ENCODE measurements at regions of chr1 and their contacts with region 1.

Region 1: DNA sequence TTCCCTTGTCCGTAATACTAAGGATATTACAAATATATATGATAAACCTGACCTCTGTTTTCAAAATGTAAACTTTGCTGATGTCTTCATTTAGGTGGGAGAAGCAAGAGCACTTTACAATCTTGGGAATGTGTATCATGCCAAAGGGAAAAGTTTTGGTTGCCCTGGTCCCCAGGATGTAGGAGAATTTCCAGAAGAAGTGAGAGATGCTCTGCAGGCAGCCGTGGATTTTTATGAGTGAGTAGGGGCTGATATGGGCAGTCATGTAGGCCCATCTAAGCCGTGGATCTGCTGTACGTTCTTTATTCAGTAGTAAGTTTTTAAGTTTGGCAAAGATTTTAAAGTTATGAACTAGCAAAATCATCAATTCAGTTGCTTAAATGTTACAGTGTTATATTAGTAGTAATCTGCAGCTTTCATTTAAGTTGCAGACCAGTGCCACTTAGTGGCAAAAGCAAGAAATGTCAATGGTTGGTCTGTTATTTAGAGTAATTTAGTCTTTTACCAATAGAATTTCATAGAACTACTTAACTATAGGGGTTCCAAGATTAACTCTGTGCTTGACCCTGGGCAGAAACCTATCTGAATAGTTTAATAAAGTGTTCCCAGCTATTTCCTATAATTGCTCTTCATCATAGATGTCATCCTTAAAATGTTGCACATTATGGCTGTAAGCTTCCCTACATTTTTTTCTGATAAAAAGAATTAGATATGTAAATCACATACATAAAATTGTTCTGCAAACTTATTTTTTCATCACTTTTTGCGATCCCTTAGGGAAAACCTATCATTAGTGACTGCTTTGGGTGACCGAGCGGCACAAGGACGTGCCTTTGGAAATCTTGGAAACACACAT is 21.3 kb downstream of the GPSM2 start:
- DNase-seq: peak in 1 of 2 donors; percentile 82
- H3K4me3 ChIP-seq: no peak overlapping the region
- H3K27ac ChIP-seq: no peak overlapping the region
- H3K4me1 ChIP-seq: peaks cover 0 to 5% (median 0%) of the 10 kb centered on the region in 4 donors
- H3K27me3 ChIP-seq: no peaks in the 10 kb centered on the region
- CTCF ChIP-seq: peak in 5 of 7 experiments; percentile 45 to 64 (median 58)
- EP300 ChIP-seq: no peak
- POLR2A ChIP-seq: no peak

Region 2: DNA sequence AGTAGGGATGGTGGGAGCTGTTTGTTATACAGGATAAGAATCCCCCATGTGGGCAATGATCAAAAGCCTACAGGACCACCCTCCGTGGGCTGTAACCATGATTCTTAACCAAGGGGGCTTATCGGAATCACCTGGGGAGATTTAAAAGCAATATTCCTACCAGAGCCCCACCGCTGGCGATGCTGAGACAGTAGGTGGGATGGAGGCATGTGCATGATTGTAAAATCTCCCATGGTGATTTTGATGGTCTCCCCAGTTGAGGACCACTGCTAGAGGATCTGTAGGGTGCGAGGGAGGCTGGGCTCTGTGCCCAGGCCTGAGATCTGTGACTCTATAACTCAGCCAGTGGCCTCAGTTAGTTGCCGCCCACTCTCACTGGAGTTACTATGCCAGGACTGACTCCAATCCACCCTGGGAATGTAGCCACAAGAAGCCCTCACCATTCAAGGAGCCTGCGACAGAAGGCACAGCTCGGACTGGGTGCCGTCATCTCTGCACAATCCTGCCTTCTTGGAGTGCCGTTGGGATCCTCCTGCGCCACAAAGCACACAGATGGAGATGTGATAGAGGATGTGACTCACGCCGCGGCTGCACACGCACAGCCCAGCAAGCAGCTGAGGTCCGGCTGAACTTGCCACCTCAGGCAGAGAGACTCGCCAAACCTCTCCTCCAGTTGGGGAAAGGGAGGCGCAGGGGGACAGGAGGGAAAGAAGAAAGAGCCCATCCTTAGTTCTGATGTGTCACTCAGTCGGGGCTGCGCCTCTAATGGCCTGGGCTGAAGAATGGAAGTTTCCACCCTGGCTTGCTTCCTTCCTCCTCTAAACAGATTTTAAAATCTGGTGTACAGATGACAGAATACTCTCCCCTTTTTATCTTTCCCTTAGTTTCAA is 67.7 kb before region 1 on chr1:
- intact Hi-C with region 1: loop called (anchors 5 kb)
- DNase-seq: peak; percentile 60 to 80
- H3K4me3 ChIP-seq: peak overlapping the region in 2 of 4 donors; percentile 0 to 7
- H3K27ac ChIP-seq: peak overlapping the region; percentile 16 to 86 (median 82)
- H3K4me1 ChIP-seq: peaks cover 0 to 36% (median 21%) of the 10 kb centered on the region in 4 donors
- H3K27me3 ChIP-seq: no peaks in the 10 kb centered on the region
- CTCF ChIP-seq: no peak
- EP300 ChIP-seq: no peak
- POLR2A ChIP-seq: no peak

Region 3: GRCh38 chr1:108955881-108956280 is 57.8 kb after region 1 on chr1:
- intact Hi-C with region 1: no loop called
- DNase-seq: no peak
- H3K4me3 ChIP-seq: no peak overlapping the region
- H3K27ac ChIP-seq: no peak overlapping the region
- H3K4me1 ChIP-seq: peaks cover 14 to 65% (median 31%) of the 10 kb centered on the region in 4 donors
- H3K27me3 ChIP-seq: no peaks in the 10 kb centered on the region
- CTCF ChIP-seq: no peak
- EP300 ChIP-seq: no peak
- POLR2A ChIP-seq: no peak